MCF 10A (cell line): ENCODE measurements at regions of chr6 and their contacts with region 1.

Region 1: DNA sequence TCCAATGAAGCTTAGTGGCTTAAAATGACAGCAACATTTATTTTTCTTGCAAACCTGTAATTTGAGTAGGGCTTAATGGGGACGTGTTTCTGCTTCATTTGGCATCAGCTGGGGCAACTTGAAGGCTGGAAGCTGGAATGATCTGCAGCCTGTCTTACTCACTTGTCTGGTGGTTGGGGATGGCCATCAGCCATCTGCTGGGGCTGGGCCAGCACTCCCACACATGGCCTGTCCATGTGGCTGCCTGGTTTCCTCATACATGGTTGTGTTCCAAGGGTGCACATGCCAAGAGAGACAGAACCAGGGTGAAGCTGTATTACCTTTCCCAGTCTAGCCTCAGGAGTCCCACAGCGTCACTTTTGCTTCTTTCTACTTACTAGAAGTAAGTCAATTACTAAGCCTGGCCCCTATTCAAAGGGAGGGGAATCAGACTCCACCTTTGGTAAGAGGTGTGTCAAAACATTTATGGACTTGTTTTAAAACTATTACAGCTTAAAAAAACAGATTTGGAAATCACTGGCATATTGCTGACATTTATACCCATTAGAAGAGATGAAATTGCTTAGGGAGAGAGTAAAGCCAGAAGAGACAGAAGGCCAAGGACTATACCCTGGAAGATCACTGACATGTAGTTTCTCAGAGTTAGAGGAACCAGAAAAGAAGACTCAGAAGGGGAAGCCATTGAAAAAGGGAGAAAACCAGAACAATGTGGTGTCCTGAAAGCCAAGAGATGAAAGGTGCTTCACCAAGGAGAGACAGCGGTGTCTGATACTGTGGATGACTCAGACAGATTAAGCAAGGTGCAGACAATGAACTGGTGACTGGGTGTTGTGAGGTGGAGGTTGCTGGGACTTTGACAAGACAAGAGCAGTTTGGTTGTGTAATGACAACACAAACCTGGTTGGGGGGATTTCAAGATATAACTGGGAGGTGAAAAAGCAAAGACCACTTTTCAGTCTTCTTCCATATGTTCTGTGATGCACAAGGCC is 345.2 kb downstream of the GJA1 start:
- DNase-seq: peak; percentile 98
- H3K4me3 Mint-ChIP-seq: no peak overlapping the region
- H3K27ac Mint-ChIP-seq: no peak overlapping the region
- H3K4me1 Mint-ChIP-seq: no peaks in the 10 kb centered on the region
- H3K27me3 Mint-ChIP-seq: no peaks in the 10 kb centered on the region
- CTCF ChIP-seq: no peak

Region 2: DNA sequence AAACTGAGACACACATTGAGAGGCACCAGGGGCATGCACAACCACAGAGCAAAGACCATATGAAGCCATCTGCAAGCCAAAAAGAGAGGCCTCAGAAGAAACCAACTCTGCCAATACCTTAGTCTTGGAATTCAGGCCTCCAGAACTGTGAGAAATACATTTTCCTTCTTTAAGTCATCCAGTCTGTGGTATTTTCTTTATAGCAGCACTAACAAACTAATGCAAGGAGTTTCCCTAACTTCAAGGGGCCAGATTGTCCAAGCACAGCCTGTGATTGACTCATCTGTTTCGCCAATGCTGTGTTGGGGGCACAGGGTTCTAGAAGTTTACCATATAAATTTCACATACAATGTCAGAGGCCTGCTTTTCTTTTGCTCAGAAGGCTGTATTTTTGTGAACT is 19.4 kb after region 1 on chr6:
- CTCF ChIA-PET with region 1: no interaction called
- POLR2A ChIA-PET with region 1: no interaction called
- intact Hi-C with region 1: no loop called
- DNase-seq: no peak
- H3K4me3 Mint-ChIP-seq: no peak overlapping the region
- H3K27ac Mint-ChIP-seq: no peak overlapping the region
- H3K4me1 Mint-ChIP-seq: no peaks in the 10 kb centered on the region
- H3K27me3 Mint-ChIP-seq: no peaks in the 10 kb centered on the region
- CTCF ChIP-seq: no peak

Region 3: GRCh38 chr6:121826156-121826810 is 45.7 kb after region 1 on chr6:
- CTCF ChIA-PET with region 1: no interaction called
- POLR2A ChIA-PET with region 1: no interaction called
- intact Hi-C with region 1: loop called (anchors 5 kb)
- DNase-seq: peak; percentile 90
- H3K4me3 Mint-ChIP-seq: no peak overlapping the region
- H3K27ac Mint-ChIP-seq: no peak overlapping the region
- H3K4me1 Mint-ChIP-seq: peaks cover 22% of the 10 kb centered on the region
- H3K27me3 Mint-ChIP-seq: no peaks in the 10 kb centered on the region
- CTCF ChIP-seq: no peak